ENCODE measurements at regions of chrX and their contacts with region 1.

Region 1: GRCh38 chrX:17744896-17745523 is 7.7 kb downstream of the SCML1 start:
- DNase-seq: no peak
- H3K4me3 ChIP-seq: no peak overlapping the region
- H3K27ac ChIP-seq: no peak overlapping the region
- H3K4me1 ChIP-seq: no peaks in the 10 kb centered on the region
- H3K27me3 ChIP-seq: no peaks in the 10 kb centered on the region
- CTCF ChIP-seq: peak; percentile 42 to 45

Region 2: DNA sequence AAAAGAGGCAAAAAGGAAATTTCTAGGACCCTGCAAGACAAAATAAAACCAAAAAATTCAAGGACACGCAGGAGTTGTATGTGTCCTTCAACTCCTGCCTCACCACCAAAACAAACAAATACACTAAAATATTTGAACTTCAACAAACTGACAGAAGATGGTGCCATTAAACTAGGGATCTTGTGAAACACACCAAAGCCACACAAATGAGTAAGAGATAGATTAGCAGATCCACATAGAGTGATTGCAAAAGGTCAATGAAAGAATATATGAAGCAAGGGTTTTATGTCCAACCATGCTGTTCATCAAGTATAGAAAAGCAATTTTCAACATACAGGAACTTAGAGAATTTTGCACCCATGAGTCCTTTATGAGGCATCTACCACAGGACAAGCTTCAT is 47.8 kb before region 1 on chrX:
- CTCF ChIA-PET with region 1: no interaction called
- dilution Hi-C with region 1: no loop called
- in situ Hi-C with region 1: no loop called
- intact Hi-C with region 1: loop called (anchors 2 kb)
- DNase-seq: peak; percentile 39
- H3K4me3 ChIP-seq: no peak overlapping the region
- H3K27ac ChIP-seq: no peak overlapping the region
- H3K4me1 ChIP-seq: no peaks in the 10 kb centered on the region
- H3K27me3 ChIP-seq: no peaks in the 10 kb centered on the region
- CTCF ChIP-seq: peak; percentile 12 to 32

Region 3: GRCh38 chrX:17792826-17793225 is 47.8 kb after region 1 on chrX:
- CTCF ChIA-PET with region 1: no interaction called
- dilution Hi-C with region 1: no loop called
- in situ Hi-C with region 1: no loop called
- intact Hi-C with region 1: no loop called
- DNase-seq: no peak
- H3K4me3 ChIP-seq: no peak overlapping the region
- H3K27ac ChIP-seq: no peak overlapping the region
- H3K4me1 ChIP-seq: peaks cover 3% of the 10 kb centered on the region
- H3K27me3 ChIP-seq: no peaks in the 10 kb centered on the region
- CTCF ChIP-seq: no peak

Region 4: DNA sequence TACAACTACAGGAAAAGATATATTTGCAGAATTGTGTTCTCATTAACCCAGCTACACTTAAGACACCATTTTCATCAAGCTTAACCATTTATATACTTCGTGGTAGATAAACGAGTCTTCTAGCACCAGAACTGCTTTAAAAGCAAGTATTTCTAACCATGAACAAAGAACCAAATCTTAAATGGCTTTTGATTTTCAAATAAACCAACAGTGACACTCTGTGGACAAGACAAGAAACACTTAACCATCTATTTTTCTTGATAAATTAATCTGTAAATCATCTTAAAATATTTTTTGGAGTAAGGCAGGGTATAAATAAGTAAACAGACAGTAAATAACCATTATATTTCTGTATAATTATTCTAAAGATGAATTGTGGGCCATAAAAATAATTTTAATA is 465.5 kb after region 1 on chrX:
- CTCF ChIA-PET with region 1: no interaction called
- dilution Hi-C with region 1: no loop called
- in situ Hi-C with region 1: no loop called
- intact Hi-C with region 1: loop called (anchors 5 kb)
- DNase-seq: no peak
- H3K4me3 ChIP-seq: no peak overlapping the region
- H3K27ac ChIP-seq: no peak overlapping the region
- H3K4me1 ChIP-seq: no peaks in the 10 kb centered on the region
- H3K27me3 ChIP-seq: no peaks in the 10 kb centered on the region
- CTCF ChIP-seq: peak in 1 of 2 donors; percentile 25

Region 5: DNA sequence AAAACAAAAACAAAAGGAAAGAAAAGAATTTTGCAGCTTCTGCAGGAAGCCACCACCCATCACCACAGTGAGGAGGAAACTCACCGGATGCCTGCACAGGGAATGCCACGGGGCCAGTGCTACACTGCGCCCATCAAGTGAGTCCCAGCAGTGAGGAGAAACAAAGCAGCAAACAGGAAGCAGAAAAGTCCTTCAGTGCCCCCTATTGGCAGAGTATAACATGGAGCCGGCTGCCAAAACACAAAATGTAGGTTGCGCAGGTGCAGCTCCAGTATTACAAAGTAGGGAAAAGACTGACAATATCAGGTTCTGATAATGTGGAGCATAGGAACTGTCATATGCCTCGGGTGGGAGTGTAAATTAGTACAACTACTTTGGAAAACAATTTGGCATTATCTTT is 632.8 kb after region 1 on chrX:
- CTCF ChIA-PET with region 1: no interaction called
- dilution Hi-C with region 1: no loop called
- in situ Hi-C with region 1: no loop called
- intact Hi-C with region 1: loop called (anchors 10 kb)
- DNase-seq: no peak
- H3K4me3 ChIP-seq: no peak overlapping the region
- H3K27ac ChIP-seq: no peak overlapping the region
- H3K4me1 ChIP-seq: no peaks in the 10 kb centered on the region
- H3K27me3 ChIP-seq: peaks cover 2% of the 10 kb centered on the region
- CTCF ChIP-seq: peak; percentile 23 to 44